Breast epithelium (tissue), 4 donors: ENCODE measurements at regions of chr10 and their contacts with region 1.

Region 1: GRCh38 chr10:116056445-116057293 is 216.3 kb downstream of the GFRA1 start:
- DNase-seq: no peak
- H3K4me3 ChIP-seq: no peak overlapping the region
- H3K27ac ChIP-seq: no peak overlapping the region
- H3K4me1 ChIP-seq: no peaks in the 10 kb centered on the region
- H3K27me3 ChIP-seq: no peaks in the 10 kb centered on the region
- CTCF ChIP-seq: no peak
- POLR2A ChIP-seq: no peak

Region 2: DNA sequence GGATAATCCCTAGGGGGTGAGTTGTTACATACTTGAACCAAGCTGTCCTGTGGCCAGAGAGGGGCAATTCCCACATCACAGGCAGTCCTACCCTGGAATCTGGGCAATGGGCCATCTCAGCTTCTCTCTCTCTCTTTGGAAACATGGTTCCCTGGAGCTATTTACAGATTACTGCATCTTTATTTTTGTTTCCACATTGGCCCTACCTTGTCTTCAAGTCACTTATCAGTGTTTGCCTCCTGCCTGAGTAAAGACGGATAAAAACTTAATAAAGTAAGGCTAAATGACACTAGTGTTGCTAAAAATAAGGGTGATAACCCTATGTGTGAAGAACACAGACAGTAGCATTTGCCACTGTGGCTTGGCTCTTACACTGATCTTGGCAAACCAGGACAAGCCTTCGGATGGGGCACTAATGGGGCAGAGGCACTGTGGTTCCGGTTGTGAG is 11.8 kb before region 1 on chr10:
- intact Hi-C with region 1: loop called (anchors 1 kb)
- DNase-seq: no peak
- H3K4me3 ChIP-seq: no peak overlapping the region
- H3K27ac ChIP-seq: no peak overlapping the region
- H3K4me1 ChIP-seq: no peaks in the 10 kb centered on the region
- H3K27me3 ChIP-seq: no peaks in the 10 kb centered on the region
- CTCF ChIP-seq: no peak
- POLR2A ChIP-seq: no peak